IMR-90 (cell line): ENCODE measurements at regions of chr15 and their contacts with region 1.

Region 1: DNA sequence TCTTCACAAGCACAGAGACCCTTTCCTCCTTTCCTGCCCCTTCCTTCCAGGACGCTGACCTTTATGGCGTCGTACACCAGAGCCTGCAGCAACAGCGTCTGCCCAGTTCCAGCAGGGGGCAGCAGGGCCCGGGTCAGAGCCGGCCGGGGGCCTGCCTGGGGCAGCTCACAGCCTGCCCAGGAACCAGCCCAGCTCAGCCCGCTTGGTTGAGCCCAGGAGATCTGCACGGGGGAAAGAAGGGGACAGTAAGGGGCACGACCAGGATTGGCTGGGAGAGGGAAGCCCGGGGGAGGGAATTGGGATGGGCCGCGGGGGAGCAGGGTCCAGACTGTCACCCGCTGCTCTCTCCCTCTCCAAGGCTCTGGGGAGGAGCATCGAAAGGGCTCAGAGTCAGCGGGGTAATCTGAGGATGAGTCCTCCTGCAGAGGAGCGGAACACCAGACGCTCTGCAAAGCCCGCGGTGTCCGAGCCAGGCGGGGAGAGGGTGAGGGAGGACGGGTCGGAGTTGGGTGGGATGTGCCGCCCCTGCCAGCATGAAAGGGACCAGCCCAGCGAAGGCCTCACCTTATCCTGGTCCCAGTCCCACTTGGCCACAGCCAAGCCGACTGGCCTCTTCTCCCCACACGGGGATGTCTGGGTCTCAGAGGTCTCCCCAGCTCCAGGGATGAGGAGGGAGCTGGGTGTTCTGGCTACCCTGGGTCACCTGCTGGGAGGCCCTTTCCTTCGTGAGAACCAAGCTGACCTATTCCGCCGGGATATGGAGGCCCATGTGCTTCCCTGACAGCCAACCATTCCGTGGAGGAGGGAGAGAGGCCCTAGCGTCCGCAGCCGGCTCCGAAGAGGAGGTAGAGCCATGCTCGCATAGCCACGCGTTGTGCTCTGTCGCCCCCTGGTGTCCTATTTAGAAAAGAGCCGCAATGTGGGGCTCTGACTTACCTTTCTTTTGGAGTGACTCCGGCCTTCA is 7.4 kb upstream of the IGDCC3 start:
- DNase-seq: peak; percentile 69
- ATAC-seq: peak; percentile 97
- H3K4me3 ChIP-seq: no peak overlapping the region
- H3K27ac ChIP-seq: no peak overlapping the region
- H3K4me1 ChIP-seq: peaks cover 2% of the 10 kb centered on the region; the same call in 1 of the 2 replicates
- H3K27me3 ChIP-seq: peaks cover 20% of the 10 kb centered on the region
- CTCF ChIP-seq: peak; percentile 93
- POLR2A ChIP-seq: no peak
- RAD21 ChIP-seq: peak; percentile 88

Region 2: GRCh38 chr15:65192016-65192415 is 193.2 kb before region 1 on chr15:
- CTCF ChIA-PET with region 1: interaction called, 3 read pairs
- POLR2A ChIA-PET with region 1: no interaction called
- dilution Hi-C with region 1: no loop called
- in situ Hi-C with region 1: loop called (anchors 10 kb)
- intact Hi-C with region 1: no loop called
- DNase-seq: peak; percentile 13
- ATAC-seq: no peak; the same call in 1 of the 2 replicates
- H3K4me3 ChIP-seq: no peak overlapping the region
- H3K27ac ChIP-seq: no peak overlapping the region
- H3K4me1 ChIP-seq: no peaks in the 10 kb centered on the region
- H3K27me3 ChIP-seq: peaks cover 18% of the 10 kb centered on the region
- CTCF ChIP-seq: no peak
- POLR2A ChIP-seq: no peak
- RAD21 ChIP-seq: no peak

Region 3: DNA sequence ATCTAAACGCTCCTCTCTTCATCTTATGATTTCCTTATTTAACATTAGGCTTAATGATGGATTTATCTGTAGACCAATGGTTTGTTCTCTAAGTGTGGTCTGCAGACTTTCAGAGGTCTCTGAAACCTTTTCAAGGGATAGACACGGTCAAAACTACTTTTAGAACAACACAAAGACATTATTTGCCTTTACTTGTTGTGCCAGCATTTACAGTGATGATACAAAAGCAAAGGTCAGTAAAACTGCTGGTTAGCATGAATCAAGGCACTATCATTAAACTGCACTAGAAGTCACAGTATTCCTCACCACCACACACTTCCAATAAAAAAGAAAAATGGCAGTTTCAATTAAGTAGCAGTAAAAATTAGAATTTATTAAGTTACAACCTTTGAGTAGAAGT is 62.0 kb after region 1 on chr15:
- CTCF ChIA-PET with region 1: no interaction called
- POLR2A ChIA-PET with region 1: no interaction called
- dilution Hi-C with region 1: no loop called
- in situ Hi-C with region 1: no loop called
- intact Hi-C with region 1: no loop called
- DNase-seq: no peak
- ATAC-seq: no peak
- H3K4me3 ChIP-seq: no peak overlapping the region
- H3K27ac ChIP-seq: no peak overlapping the region
- H3K4me1 ChIP-seq: no peaks in the 10 kb centered on the region
- H3K27me3 ChIP-seq: no peaks in the 10 kb centered on the region
- CTCF ChIP-seq: no peak
- POLR2A ChIP-seq: no peak
- RAD21 ChIP-seq: no peak